ENCODE measurements at regions of chr15 and their contacts with region 1.

Region 1: GRCh38 chr15:75453703-75454470 is 2.4 kb upstream of the SIN3A start:
- H3K4me3 Mint-ChIP-seq: peak overlapping the region; percentile 90
- H3K27ac Mint-ChIP-seq: peak overlapping the region; percentile 96
- H3K4me1 Mint-ChIP-seq: peaks cover 47% of the 10 kb centered on the region
- H3K27me3 Mint-ChIP-seq: no peaks in the 10 kb centered on the region

Region 2: GRCh38 chr15:74787251-74788041 is 666.4 kb before region 1 on chr15:
- intact Hi-C with region 1: loop called (anchors 5 kb)
- H3K4me3 Mint-ChIP-seq: peak overlapping the region; percentile 97
- H3K27ac Mint-ChIP-seq: peak overlapping the region; percentile 93
- H3K4me1 Mint-ChIP-seq: peaks cover 90% of the 10 kb centered on the region
- H3K27me3 Mint-ChIP-seq: no peaks in the 10 kb centered on the region

Region 3: DNA sequence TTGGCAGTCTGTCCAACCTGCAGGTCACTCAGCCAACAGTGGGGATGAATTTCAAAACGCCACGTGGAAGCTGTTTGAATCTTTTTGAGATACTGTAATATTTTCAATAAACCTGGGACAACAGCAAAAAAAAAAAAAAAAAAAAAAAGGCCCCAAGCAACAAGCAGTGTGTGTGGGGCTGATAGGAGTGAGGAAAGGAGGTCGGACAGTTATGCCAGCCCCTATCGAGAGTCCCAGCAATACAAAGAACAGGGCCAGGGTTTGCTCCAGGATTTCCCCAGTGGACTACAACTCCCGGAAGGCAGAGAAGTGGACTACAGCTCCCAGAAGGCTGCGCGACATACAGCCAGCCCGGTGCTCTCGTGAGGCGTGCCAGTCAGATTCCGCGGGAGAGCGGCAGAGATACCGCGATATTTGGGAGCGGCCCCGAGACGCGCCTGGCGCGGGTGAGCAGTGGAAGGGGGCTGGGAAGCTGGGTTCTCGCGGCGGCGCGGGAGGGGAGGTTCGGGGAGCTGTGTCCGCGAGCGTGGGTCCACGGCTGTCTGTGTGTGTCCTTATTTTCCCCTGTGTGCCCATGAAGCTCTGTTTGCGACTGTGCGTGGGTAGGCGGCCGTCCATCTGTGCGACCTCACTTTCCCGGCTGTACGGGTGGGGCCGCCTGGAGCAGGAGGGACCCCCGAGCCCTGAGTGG is 430.6 kb before region 1 on chr15 and contains the start of gene PPCDC:
- intact Hi-C with region 1: loop called (anchors 10 kb)
- H3K4me3 Mint-ChIP-seq: peak within 1 kb of the TSS; percentile 82
- H3K27ac Mint-ChIP-seq: peak within 1 kb of the TSS; percentile 93
- H3K4me1 Mint-ChIP-seq: peaks cover 63% of the 10 kb centered on the region
- H3K27me3 Mint-ChIP-seq: no peaks in the 10 kb centered on the region

Region 4: DNA sequence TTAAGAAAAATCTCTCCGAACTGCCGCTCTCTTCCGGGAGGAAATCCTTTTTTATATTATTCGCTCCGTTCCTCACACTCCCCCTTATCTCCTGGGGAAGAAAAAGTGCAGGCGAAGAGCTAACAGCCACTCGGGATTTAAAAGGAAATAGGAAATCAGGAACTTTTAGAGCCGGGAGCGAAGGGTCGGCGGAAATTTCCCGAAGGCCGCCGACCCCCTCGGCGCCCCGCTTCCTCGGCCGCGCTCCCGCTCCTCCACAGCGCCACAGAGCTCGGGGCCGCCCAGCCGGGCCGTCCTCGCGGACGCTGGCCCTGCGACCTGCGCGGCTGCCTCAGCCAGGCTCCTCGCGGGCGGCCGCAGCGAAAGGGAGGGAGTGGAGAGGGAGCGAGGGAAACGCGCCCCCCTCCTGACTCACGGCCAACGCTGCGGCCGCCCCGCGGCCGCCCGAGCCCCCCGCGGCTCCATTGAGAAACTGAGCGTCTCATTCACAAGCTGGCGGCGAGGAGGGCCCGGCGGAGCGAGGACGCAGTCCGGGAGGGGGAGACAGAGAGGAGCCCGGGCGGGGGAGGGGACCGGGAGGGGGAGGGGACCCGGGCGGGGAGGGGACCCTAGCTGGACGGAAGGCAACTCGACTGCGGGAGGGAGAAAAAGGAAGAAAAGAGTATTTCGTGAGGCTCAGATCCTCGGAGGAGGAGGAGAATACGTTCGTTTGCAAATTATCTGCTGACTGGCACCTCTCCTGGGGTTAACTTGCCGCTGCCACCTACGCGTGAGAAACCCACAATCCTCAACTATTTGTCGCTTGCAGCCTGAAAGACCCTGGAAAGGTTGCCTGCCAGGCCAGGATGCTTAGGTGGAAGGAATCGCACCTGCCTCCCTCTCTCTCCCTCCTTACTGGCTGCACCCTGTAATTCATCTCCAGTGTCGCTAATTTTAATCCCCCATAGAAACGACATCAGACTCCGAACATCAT is 125.3 kb after region 1 on chr15 and contains the start of gene PTPN9:
- intact Hi-C with region 1: loop called (anchors 5 kb)
- H3K4me3 Mint-ChIP-seq: peak within 1 kb of the TSS; percentile 92
- H3K27ac Mint-ChIP-seq: peak within 1 kb of the TSS; percentile 95
- H3K4me1 Mint-ChIP-seq: peaks cover 20% of the 10 kb centered on the region
- H3K27me3 Mint-ChIP-seq: no peaks in the 10 kb centered on the region

Region 5: GRCh38 chr15:75625542-75626347 is 171.9 kb after region 1 on chr15 and contains the start of gene SNUPN:
- intact Hi-C with region 1: loop called (anchors 5 kb)
- H3K4me3 Mint-ChIP-seq: peak within 1 kb of the TSS; percentile 99
- H3K27ac Mint-ChIP-seq: peak within 1 kb of the TSS; percentile 100
- H3K4me1 Mint-ChIP-seq: peaks cover 33% of the 10 kb centered on the region
- H3K27me3 Mint-ChIP-seq: no peaks in the 10 kb centered on the region

Region 6: DNA sequence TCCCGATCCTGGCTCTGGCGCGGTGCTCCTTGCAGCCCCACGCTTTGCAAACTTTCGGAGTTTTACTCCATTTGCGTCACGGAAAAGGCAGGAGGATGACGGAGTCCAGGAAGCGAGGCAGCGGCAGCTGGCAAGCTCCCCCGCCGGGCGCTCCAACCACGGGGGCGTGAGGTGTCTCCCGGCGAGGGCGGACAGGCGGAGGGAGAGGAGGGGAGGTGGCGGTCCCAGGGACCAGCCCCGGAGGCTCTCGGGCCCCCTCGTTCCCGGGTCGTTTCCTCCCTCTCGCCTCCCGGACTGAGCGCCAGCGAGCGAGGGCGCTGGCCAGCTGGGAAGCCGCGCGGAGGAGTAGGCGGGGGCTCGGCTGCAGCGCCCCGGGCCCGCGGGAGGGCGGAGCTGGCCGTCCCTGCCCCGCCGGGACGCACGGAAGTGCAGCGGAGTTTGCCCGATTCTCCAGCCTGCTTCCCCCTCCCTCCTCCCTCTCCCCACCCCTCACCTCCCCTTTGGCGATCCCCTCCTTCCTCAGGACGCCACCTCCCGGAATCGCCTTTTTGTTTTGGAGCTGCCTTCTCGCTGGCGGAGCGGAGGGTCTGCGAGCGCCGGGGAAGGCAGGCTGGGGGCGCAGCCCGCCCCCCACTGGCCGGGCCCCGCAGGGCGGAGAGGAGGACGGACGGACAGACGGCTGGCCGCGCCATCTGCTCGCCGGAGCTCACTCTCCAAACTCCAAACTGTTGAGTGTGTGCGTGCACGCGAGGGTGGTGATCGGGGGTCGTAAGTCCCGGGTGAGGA is 193.7 kb after region 1 on chr15 and contains the start of gene SNX33:
- intact Hi-C with region 1: loop called (anchors 5 kb)
- H3K4me3 Mint-ChIP-seq: peak within 1 kb of the TSS; percentile 92
- H3K27ac Mint-ChIP-seq: peak within 1 kb of the TSS; percentile 90
- H3K4me1 Mint-ChIP-seq: peaks cover 55% of the 10 kb centered on the region
- H3K27me3 Mint-ChIP-seq: peaks cover 12% of the 10 kb centered on the region

Measured in dendritic cell treated with granulocyte-macrophage colony-stimulating factor and Interleukin-4, amounts not matched to agents 40 ng/mL and 50 ng/mL, for 4 days (primary cell).